BJ (cell line): ENCODE measurements at regions of chr21 and their contacts with region 1.

Region 1: GRCh38 chr21:36446301-36446700 is 33.6 kb downstream of the CLDN14 start:
- DNase-seq: no peak
- H3K4me3 ChIP-seq: no peak overlapping the region
- H3K27me3 ChIP-seq: no peaks in the 10 kb centered on the region
- CTCF ChIP-seq: no peak

Region 2: GRCh38 chr21:36583591-36583990 is 137.3 kb after region 1 on chr21:
- CTCF ChIA-PET with region 1: no interaction called
- POLR2A ChIA-PET with region 1: interaction called, 15 read pairs
- DNase-seq: no peak
- H3K4me3 ChIP-seq: no peak overlapping the region
- H3K27me3 ChIP-seq: peaks cover 10% of the 10 kb centered on the region
- CTCF ChIP-seq: no peak